Activated CD4-positive, alpha-beta memory T cell treated with anti-CD3 and anti-CD28 coated beads for 36 hours (primary cell): ENCODE measurements at regions of chr9 and their contacts with region 1.

Region 1: DNA sequence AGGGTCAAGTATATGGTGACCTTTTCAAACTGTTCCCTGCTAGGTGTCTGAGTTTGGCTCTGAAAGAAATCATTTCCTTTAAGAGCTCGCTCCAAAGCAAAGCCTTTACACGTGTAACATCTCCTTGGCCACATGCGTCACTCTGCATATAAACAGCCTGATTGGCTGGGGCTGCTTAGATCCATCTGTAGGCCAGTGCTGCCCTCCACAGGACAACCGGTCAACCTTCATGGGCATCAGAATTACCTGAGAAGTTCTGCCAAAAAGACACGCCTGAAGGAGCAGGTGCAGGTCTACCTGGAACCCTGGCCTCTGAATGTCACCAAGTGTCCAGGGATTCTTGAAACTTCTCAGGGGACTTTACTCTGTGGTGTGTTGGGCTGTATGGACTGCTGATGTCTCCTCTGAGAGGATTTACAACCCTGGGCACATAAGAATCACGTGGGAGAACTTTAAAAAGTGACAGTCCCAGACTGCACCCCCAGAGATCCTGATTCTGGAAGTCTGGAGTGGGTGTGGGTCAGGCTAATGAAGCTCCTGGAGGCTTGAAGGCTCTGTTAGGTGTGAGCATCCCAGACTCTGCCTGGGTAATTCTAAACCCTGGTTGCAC is 497.6 kb downstream of the GADD45G start:
- DNase-seq: peak; percentile 87
- H3K4me3 Mint-ChIP-seq: no peak overlapping the region
- H3K27ac Mint-ChIP-seq: no peak overlapping the region
- H3K4me1 Mint-ChIP-seq: peaks cover 2% of the 10 kb centered on the region
- H3K27me3 Mint-ChIP-seq: peaks cover 7% of the 10 kb centered on the region

Region 2: DNA sequence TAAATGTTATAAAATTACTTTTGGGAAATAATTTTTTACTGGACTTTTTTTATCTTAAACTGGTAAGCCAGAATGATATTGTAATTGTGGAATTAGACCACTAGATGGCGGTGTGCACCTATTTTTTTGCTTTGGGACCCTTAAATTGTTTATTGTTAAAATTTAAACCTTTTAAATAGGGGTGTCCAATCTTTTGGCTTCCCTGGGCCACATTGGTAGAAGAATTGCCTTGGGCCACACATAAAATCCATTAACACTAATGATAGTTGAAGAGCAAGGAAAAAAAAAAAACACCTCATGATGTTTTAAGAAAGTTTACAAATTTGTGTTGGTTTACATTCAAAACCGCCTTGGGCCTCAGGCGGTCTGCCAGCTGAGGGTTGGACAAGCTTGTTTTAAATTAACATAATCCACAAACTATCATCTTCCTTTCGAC is 526.0 kb before region 1 on chr9:
- CTCF ChIA-PET with region 1: interaction called, 10 read pairs
- POLR2A ChIA-PET with region 1: no interaction called
- intact Hi-C with region 1: no loop called
- DNase-seq: no peak
- H3K4me3 Mint-ChIP-seq: no peak overlapping the region
- H3K27ac Mint-ChIP-seq: no peak overlapping the region
- H3K4me1 Mint-ChIP-seq: peaks cover 8% of the 10 kb centered on the region
- H3K27me3 Mint-ChIP-seq: peaks cover 29% of the 10 kb centered on the region

Region 3: GRCh38 chr9:89743573-89744361 is 358.6 kb before region 1 on chr9:
- CTCF ChIA-PET with region 1: interaction called, 3 read pairs
- POLR2A ChIA-PET with region 1: no interaction called
- intact Hi-C with region 1: loop called (anchors 10 kb)
- DNase-seq: peak; percentile 65
- H3K4me3 Mint-ChIP-seq: no peak overlapping the region
- H3K27ac Mint-ChIP-seq: peak overlapping the region; percentile 64
- H3K4me1 Mint-ChIP-seq: peaks cover 78% of the 10 kb centered on the region
- H3K27me3 Mint-ChIP-seq: no peaks in the 10 kb centered on the region

Region 4: GRCh38 chr9:89815903-89816573 is 286.4 kb before region 1 on chr9:
- CTCF ChIA-PET with region 1: no interaction called
- POLR2A ChIA-PET with region 1: no interaction called
- intact Hi-C with region 1: loop called (anchors 10 kb)
- DNase-seq: no peak
- H3K4me3 Mint-ChIP-seq: no peak overlapping the region
- H3K27ac Mint-ChIP-seq: no peak overlapping the region
- H3K4me1 Mint-ChIP-seq: peaks cover 2% of the 10 kb centered on the region
- H3K27me3 Mint-ChIP-seq: no peaks in the 10 kb centered on the region

Region 5: DNA sequence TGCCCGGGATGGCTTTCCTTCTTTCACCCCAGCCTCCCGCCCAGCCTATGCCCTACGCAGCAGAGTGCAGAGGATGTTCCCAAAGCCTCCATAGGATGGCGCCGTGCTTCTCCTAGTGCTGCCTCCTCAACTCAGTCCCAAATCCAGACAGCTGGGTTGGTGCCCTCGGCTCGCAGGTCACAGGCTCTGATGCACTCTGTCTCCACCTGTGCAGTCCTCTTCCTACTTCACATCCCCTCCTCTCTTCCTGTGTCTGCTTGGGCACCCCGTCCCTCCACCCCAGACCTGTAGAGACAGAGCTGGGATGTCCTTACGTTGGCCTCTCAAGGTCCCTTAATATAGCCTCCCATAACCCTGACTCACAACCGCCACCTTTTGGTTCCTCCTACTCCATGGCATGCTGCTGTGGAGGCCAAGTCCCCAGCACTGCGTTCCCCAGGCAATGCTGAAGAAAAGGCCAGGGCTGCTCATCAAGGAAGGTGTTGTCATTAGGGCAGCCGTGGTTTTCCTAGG is 183.2 kb before region 1 on chr9:
- CTCF ChIA-PET with region 1: interaction called, 9 read pairs
- POLR2A ChIA-PET with region 1: no interaction called
- intact Hi-C with region 1: loop called (anchors 5 kb)
- DNase-seq: peak; percentile 71
- H3K4me3 Mint-ChIP-seq: no peak overlapping the region
- H3K27ac Mint-ChIP-seq: peak overlapping the region; percentile 4
- H3K4me1 Mint-ChIP-seq: peaks cover 15% of the 10 kb centered on the region
- H3K27me3 Mint-ChIP-seq: no peaks in the 10 kb centered on the region

Region 6: GRCh38 chr9:89999534-90000370 is 102.6 kb before region 1 on chr9:
- CTCF ChIA-PET with region 1: interaction called, 3 read pairs
- POLR2A ChIA-PET with region 1: no interaction called
- intact Hi-C with region 1: loop called (anchors 5 kb)
- DNase-seq: peak; percentile 85
- H3K4me3 Mint-ChIP-seq: peak overlapping the region; percentile 63
- H3K27ac Mint-ChIP-seq: peak overlapping the region; percentile 73
- H3K4me1 Mint-ChIP-seq: peaks cover 34% of the 10 kb centered on the region
- H3K27me3 Mint-ChIP-seq: no peaks in the 10 kb centered on the region

Region 7: GRCh38 chr9:90038763-90039162 is 63.6 kb before region 1 on chr9:
- CTCF ChIA-PET with region 1: no interaction called
- POLR2A ChIA-PET with region 1: no interaction called
- intact Hi-C with region 1: no loop called
- DNase-seq: no peak
- H3K4me3 Mint-ChIP-seq: no peak overlapping the region
- H3K27ac Mint-ChIP-seq: no peak overlapping the region
- H3K4me1 Mint-ChIP-seq: peaks cover 2% of the 10 kb centered on the region
- H3K27me3 Mint-ChIP-seq: peaks cover 3% of the 10 kb centered on the region